Activated CD8-positive, alpha-beta T cell treated with anti-CD3 and anti-CD28 coated beads for 36 hours (primary cell): ENCODE measurements at regions of chr16 and their contacts with region 1.

Region 1: GRCh38 chr16:79269211-79269863 is 331.2 kb downstream of the MAF start:
- DNase-seq: peak; percentile 87
- ATAC-seq: peak; percentile 74
- H3K4me3 Mint-ChIP-seq: peak overlapping the region; percentile 24
- H3K27ac Mint-ChIP-seq: peak overlapping the region; percentile 84
- H3K4me1 Mint-ChIP-seq: peaks cover 67% of the 10 kb centered on the region
- H3K27me3 Mint-ChIP-seq: peaks cover 46% of the 10 kb centered on the region
- CTCF ChIP-seq: no peak

Region 2: GRCh38 chr16:79083508-79084299 is 185.6 kb before region 1 on chr16:
- CTCF ChIA-PET with region 1: no interaction called
- POLR2A ChIA-PET with region 1: no interaction called
- intact Hi-C with region 1: loop called (anchors 5 kb)
- DNase-seq: peak; percentile 20
- ATAC-seq: no peak
- H3K4me3 Mint-ChIP-seq: no peak overlapping the region
- H3K27ac Mint-ChIP-seq: no peak overlapping the region
- H3K4me1 Mint-ChIP-seq: peaks cover 43% of the 10 kb centered on the region
- H3K27me3 Mint-ChIP-seq: peaks cover 22% of the 10 kb centered on the region
- CTCF ChIP-seq: no peak

Region 3: GRCh38 chr16:79089735-79090284 is 179.5 kb before region 1 on chr16:
- CTCF ChIA-PET with region 1: no interaction called
- POLR2A ChIA-PET with region 1: no interaction called
- intact Hi-C with region 1: loop called (anchors 2 kb)
- DNase-seq: peak; percentile 89
- ATAC-seq: peak; percentile 79
- H3K4me3 Mint-ChIP-seq: peak overlapping the region; percentile 49
- H3K27ac Mint-ChIP-seq: peak overlapping the region; percentile 89
- H3K4me1 Mint-ChIP-seq: peaks cover 53% of the 10 kb centered on the region
- H3K27me3 Mint-ChIP-seq: peaks cover 8% of the 10 kb centered on the region
- CTCF ChIP-seq: no peak

Region 4: DNA sequence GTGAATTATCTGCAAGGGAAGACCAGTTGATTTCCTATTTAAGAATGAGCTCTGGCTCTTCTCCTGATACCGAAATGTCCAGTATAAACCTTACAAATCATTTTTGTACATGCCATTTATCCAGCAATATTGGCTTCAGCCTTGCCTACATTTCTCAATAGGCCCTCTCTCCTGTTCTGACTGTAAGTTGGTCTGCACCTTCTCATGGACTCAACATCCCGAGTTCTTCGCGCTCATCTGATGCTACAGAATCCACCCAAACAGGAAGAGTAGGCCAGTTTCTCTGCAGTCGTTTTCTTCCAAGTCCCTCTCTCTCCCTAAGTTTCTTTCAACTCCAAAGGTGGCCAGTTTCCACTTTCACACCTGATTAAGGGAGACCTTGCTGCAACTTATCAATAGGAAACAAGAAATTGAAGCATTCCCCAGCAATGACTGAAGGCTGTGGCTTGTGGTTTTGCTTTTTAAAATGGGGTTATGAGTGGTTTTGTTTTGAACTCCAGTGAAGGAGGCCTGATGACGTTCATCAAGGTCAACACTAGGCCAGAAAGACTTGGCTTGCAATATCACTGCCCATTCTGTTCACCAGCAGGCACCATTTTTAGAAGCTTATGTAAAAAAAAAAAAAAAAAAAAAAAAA is 51.8 kb before region 1 on chr16:
- CTCF ChIA-PET with region 1: interaction called, 3 read pairs
- POLR2A ChIA-PET with region 1: no interaction called
- intact Hi-C with region 1: loop called (anchors 5 kb)
- DNase-seq: peak; percentile 45
- ATAC-seq: peak; percentile 81
- H3K4me3 Mint-ChIP-seq: no peak overlapping the region
- H3K27ac Mint-ChIP-seq: no peak overlapping the region
- H3K4me1 Mint-ChIP-seq: peaks cover 4% of the 10 kb centered on the region
- H3K27me3 Mint-ChIP-seq: peaks cover 1% of the 10 kb centered on the region
- CTCF ChIP-seq: no peak

Region 5: GRCh38 chr16:79253100-79253631 is 16.2 kb before region 1 on chr16:
- CTCF ChIA-PET with region 1: no interaction called
- POLR2A ChIA-PET with region 1: no interaction called
- intact Hi-C with region 1: no loop called
- DNase-seq: no peak
- ATAC-seq: no peak
- H3K4me3 Mint-ChIP-seq: no peak overlapping the region
- H3K27ac Mint-ChIP-seq: no peak overlapping the region
- H3K4me1 Mint-ChIP-seq: no peaks in the 10 kb centered on the region
- H3K27me3 Mint-ChIP-seq: peaks cover 9% of the 10 kb centered on the region
- CTCF ChIP-seq: no peak

Region 6: GRCh38 chr16:79316004-79316458 is 46.7 kb after region 1 on chr16:
- CTCF ChIA-PET with region 1: interaction called, 4 read pairs
- POLR2A ChIA-PET with region 1: interaction called, 9 read pairs
- intact Hi-C with region 1: loop called (anchors 5 kb)
- DNase-seq: peak; percentile 82
- ATAC-seq: peak; percentile 91
- H3K4me3 Mint-ChIP-seq: no peak overlapping the region
- H3K27ac Mint-ChIP-seq: peak overlapping the region; percentile 65
- H3K4me1 Mint-ChIP-seq: peaks cover 25% of the 10 kb centered on the region
- H3K27me3 Mint-ChIP-seq: peaks cover 25% of the 10 kb centered on the region
- CTCF ChIP-seq: no peak